H1 (cell line): ENCODE measurements at regions of chr1 and their contacts with region 1.

Region 1: GRCh38 chr1:11719313-11720032 is 16.5 kb upstream of the AGTRAP start:
- DNase-seq: peak in 1 of 2 experiments; percentile 91
- H3K4me3 ChIP-seq: peak overlapping the region in 2 of 4 experiments; percentile 23 to 46; a peak in 3 of 8 replicates
- H3K27ac ChIP-seq: no peak overlapping the region
- H3K4me1 ChIP-seq: no peaks in the 10 kb centered on the region
- H3K27me3 ChIP-seq: no peaks in the 10 kb centered on the region
- CTCF ChIP-seq: peak; percentile 78 to 92 (median 84)
- EP300 ChIP-seq: no peak
- POLR2A ChIP-seq: no peak
- RAD21 ChIP-seq: peak; percentile 90 to 91

Region 2: DNA sequence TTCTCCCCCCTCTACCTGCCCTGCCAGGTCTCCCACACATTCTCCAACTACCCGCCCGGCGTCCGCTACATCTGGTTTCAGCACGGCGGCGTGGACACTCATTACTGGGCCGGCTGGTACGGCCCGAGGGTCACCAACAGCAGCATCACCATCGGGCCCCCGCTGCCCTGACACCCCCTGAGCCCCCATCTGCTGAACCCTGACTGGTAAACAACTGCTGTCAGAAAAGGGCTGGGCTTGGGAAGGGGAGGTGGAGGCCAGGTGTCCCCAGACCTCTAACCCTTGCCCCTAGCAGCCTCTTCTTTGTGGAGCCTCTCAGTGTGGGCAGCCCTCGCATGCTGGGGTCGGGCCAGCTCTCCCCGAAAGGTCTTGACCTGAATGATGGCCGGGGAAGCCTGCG is 58.4 kb before region 1 on chr1:
- CTCF ChIA-PET with region 1: interaction called, 104 read pairs
- POLR2A ChIA-PET with region 1: interaction called, 22 read pairs
- DNase-seq: no peak
- H3K4me3 ChIP-seq: no peak overlapping the region
- H3K27ac ChIP-seq: no peak overlapping the region
- H3K4me1 ChIP-seq: no peaks in the 10 kb centered on the region
- H3K27me3 ChIP-seq: no peaks in the 10 kb centered on the region; a peak in 2 of 7 replicates
- CTCF ChIP-seq: no peak
- EP300 ChIP-seq: no peak
- POLR2A ChIP-seq: no peak
- RAD21 ChIP-seq: no peak

Region 3: GRCh38 chr1:11681071-11681771 is 38.3 kb before region 1 on chr1 and contains the start of gene MAD2L2:
- CTCF ChIA-PET with region 1: interaction called, 23 read pairs
- POLR2A ChIA-PET with region 1: interaction called, 329 read pairs
- DNase-seq: peak in 1 of 2 experiments; percentile 94
- H3K4me3 ChIP-seq: peak within 1 kb of the TSS; percentile 78 to 87 (median 84)
- H3K27ac ChIP-seq: peak within 1 kb of the TSS; percentile 93
- H3K4me1 ChIP-seq: peaks cover 13 to 38% (median 26%) of the 10 kb centered on the region in 4 experiments
- H3K27me3 ChIP-seq: no peaks in the 10 kb centered on the region
- CTCF ChIP-seq: no peak
- EP300 ChIP-seq: peak in 1 of 2 experiments; percentile 69; a peak in 1 of 3 replicates
- POLR2A ChIP-seq: peak in 1 of 2 experiments; percentile 17; a peak in 1 of 3 replicates
- RAD21 ChIP-seq: no peak
- total RNA-seq, gene MAD2L2: 310 and 314 TPM in 2 replicates

Region 4: DNA sequence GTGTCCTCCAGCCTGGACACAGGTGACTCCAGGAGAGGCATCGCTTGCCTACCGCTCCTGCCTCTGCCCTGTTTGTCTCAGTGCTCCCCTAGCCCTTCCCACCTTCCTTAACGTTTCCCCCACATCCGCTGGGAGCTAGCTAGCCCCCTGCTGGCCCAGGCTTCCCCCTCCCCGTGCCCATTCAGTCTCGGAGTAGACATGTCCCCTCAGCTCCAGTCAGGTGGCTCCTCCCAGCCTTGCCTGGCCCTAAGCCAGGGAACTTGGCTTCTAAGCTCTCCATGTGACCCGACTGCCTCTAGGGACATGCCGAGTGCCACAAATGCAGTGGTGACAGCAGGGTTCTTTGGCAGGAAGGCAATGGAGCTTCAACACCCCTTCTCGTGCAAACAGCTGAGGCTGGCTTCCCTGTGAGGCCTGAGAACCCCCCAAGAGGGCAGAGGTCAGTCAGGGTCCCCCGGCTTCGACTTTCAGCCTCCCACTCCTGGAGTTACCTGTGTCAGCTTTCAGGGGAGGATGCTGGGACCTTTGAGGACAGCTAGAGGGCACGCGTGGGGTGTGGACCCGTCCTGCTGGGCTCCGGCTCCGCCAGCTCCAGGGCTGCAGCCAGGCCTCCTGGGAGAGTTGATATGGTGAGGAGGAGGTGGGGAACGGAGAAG is 11.7 kb before region 1 on chr1:
- CTCF ChIA-PET with region 1: interaction called, 58 read pairs
- POLR2A ChIA-PET with region 1: interaction called, 11 read pairs
- DNase-seq: no peak
- H3K4me3 ChIP-seq: no peak overlapping the region
- H3K27ac ChIP-seq: no peak overlapping the region
- H3K4me1 ChIP-seq: peaks cover 7 to 36% (median 26%) of the 10 kb centered on the region in 4 experiments
- H3K27me3 ChIP-seq: no peaks in the 10 kb centered on the region
- CTCF ChIP-seq: no peak
- EP300 ChIP-seq: no peak
- POLR2A ChIP-seq: no peak
- RAD21 ChIP-seq: no peak

Region 5: DNA sequence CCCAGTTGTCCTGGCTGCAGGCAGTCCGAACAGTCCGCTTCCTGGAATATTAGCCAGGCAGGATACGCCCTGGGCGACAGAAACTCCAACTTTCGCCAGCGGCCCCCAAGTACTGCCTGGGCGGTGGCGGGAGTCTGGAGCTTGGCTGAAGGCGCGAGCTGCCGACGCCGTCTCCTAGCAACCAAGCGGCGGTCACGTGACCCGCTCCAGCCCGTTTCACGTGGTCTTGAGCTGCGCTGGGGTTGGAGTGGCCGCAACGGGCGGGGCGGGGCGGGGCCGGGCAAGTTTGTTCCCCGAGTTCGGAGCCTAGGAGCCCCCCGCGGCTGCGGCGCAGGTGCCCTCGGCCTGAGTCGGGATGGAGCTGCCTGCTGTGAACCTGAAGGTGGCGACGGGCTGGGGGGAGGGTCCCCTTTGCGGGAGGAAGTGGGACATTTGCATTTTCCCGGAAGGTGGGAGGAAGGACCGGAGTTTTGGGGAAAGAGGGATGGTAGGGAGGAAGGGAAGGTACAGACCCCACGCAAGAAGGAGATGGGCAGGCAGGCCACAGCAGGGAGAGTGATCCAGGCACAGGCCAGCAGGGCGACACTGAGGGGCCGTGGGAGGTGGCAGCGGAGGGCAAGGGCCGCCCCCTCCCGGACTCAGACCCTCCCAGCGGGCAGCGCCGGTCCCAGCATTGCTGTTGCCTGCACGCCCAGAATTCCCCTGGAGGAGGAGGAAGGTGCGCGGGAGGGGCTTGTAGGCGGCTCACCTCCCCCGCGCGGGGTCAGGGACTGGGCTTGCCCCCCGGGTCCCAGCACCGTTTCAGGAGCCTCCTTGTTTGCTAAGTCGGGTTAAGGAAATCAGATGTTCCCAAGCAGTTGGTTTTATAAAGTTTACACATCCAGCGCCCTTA is 16.6 kb after region 1 on chr1 and contains the start of gene AGTRAP:
- CTCF ChIA-PET with region 1: interaction called, 17 read pairs
- POLR2A ChIA-PET with region 1: interaction called, 14 read pairs
- DNase-seq: peak; percentile 79 to 96
- H3K4me3 ChIP-seq: peak within 1 kb of the TSS; percentile 58 to 86 (median 80)
- H3K27ac ChIP-seq: peak within 1 kb of the TSS; percentile 83
- H3K4me1 ChIP-seq: peaks cover 10 to 39% (median 13%) of the 10 kb centered on the region in 4 experiments
- H3K27me3 ChIP-seq: no peaks in the 10 kb centered on the region
- CTCF ChIP-seq: peak in 2 of 3 experiments; percentile 8 to 23; a peak in 2 of 4 replicates
- EP300 ChIP-seq: peak in 1 of 2 experiments; percentile 53; a peak in 1 of 3 replicates
- POLR2A ChIP-seq: peak in 1 of 2 experiments; percentile 73; a peak in 2 of 3 replicates
- RAD21 ChIP-seq: no peak
- total RNA-seq, gene AGTRAP: 69.7 and 70.9 TPM in 2 replicates